ENCODE measurements at regions of chr4 and their contacts with region 1.

Region 1: GRCh38 chr4:52983563-52984303 is 121.6 kb downstream of the RASL11B start:
- DNase-seq: peak in 1 of 10 donors; percentile 37
- H3K4me3 ChIP-seq: no peak overlapping the region
- H3K27ac ChIP-seq: no peak overlapping the region
- H3K27me3 ChIP-seq: no peaks in the 10 kb centered on the region
- CTCF ChIP-seq: peak in 55 of 56 donors; percentile 72 to 95 (median 83)

Region 2: DNA sequence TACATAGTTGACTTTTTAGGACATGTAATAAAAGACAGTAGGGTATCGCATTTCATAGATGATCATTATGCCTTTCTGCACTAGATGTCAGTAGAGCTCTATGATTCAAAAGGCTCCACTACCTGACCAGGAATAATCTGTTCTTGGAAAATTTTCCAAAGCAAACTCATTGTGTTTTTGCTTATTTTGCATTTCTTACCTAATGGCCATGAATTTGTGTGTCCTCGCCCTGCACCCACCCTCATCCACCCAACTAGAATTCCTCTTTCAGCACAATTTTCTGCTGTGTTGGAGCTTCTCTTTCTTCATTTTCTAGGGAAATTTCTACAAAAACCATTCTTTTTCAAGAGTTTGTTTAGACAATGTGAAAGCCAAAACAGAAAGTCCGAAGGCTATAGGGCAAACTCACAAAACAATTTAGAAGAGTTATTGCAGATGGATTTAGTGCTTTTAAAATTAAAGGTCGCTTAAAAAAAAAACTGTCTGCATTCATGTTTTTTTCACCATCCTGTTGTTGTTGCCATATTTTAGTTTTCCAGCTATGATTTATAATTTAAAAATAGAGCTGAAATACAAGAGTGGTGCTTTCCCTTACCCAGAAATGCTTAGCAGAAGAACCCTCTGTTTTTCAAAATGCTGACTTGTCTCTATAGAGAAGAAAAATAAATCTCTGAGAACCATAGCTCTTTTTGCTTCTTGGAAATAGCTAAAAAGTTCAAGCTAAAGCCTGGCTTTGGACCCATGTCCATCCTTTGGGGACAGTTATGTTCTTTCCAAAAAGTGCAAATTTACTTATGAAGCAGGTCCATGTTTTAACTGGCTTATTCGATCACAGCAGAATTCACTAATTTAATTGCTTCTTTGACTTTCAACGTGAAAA is 748.9 kb before region 1 on chr4:
- intact Hi-C with region 1: loop called (anchors 5 to 10 kb)
- DNase-seq: no peak
- H3K4me3 ChIP-seq: no peak overlapping the region
- H3K27ac ChIP-seq: no peak overlapping the region
- H3K27me3 ChIP-seq: peaks cover 0 to 14% (median 0%) of the 10 kb centered on the region in 45 donors
- CTCF ChIP-seq: peak; percentile 22 to 79 (median 56)

Region 3: GRCh38 chr4:52376132-52376704 is 607.5 kb before region 1 on chr4:
- intact Hi-C with region 1: loop called (anchors 2 kb)
- DNase-seq: peak in 1 of 10 donors; percentile 14
- H3K4me3 ChIP-seq: peak overlapping the region in 1 of 59 donors; percentile 4
- H3K27ac ChIP-seq: no peak overlapping the region
- H3K27me3 ChIP-seq: no peaks in the 10 kb centered on the region
- CTCF ChIP-seq: peak; percentile 56 to 88 (median 72)

Region 4: DNA sequence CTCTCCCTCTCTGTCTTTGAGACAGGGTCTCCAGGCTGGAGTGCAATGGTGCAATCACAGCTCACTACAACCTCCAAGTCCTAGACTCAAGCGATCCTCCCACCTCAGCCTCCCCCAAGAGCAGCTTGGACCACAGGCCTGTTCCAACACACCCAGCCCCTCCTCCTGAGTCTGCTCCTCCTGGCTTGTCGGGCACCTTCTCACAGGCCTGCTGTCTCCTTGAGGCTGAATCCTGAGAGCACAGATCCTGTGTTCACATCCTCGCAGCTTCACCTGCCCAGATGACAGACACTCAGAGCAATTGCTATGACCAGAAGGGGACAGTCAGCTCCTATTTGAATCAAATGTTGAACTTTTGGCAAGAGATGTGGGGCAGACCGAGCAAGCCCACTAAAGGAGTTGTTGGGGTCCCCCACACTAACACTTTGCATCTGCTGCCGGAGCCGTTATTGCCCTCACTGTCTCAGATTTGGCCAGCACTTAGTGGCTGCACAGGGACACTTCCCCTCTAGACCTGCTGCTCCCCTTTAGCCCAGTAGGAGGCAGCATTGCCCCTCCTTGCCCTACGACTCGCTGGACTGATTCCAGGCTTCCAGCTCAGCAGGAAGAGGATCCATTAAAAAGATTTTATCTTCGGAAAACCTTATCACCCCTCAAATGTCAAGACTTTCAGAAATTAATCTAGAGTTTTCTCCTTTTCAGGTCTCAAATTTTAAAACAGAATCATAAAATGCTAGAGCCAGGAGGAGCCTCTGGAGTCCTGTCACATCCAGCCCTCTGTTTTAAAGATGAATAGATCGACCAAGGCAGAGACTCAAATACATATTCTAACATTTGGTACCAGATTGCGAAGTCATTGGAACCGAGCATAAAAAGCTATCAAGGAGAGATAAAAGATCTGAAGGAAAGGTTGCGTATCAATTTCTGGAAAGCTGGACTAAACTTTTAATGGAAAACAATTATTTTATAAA is 438.3 kb before region 1 on chr4:
- intact Hi-C with region 1: loop called (anchors 2 to 10 kb)
- DNase-seq: peak in 8 of 10 donors; percentile 30 to 74 (median 58)
- H3K4me3 ChIP-seq: peak overlapping the region in 7 of 59 donors; percentile 7 to 37 (median 35)
- H3K27ac ChIP-seq: no peak overlapping the region
- H3K27me3 ChIP-seq: peaks cover 0 to under 1% (median 0%) of the 10 kb centered on the region in 45 donors
- CTCF ChIP-seq: peak; percentile 33 to 93 (median 83)

Region 5: GRCh38 chr4:52592287-52592686 is 391.4 kb before region 1 on chr4:
- intact Hi-C with region 1: loop called in 1 of 2 experiments (anchors 5 kb)
- DNase-seq: no peak
- H3K4me3 ChIP-seq: no peak overlapping the region
- H3K27ac ChIP-seq: no peak overlapping the region
- H3K27me3 ChIP-seq: no peaks in the 10 kb centered on the region
- CTCF ChIP-seq: no peak

Region 6: DNA sequence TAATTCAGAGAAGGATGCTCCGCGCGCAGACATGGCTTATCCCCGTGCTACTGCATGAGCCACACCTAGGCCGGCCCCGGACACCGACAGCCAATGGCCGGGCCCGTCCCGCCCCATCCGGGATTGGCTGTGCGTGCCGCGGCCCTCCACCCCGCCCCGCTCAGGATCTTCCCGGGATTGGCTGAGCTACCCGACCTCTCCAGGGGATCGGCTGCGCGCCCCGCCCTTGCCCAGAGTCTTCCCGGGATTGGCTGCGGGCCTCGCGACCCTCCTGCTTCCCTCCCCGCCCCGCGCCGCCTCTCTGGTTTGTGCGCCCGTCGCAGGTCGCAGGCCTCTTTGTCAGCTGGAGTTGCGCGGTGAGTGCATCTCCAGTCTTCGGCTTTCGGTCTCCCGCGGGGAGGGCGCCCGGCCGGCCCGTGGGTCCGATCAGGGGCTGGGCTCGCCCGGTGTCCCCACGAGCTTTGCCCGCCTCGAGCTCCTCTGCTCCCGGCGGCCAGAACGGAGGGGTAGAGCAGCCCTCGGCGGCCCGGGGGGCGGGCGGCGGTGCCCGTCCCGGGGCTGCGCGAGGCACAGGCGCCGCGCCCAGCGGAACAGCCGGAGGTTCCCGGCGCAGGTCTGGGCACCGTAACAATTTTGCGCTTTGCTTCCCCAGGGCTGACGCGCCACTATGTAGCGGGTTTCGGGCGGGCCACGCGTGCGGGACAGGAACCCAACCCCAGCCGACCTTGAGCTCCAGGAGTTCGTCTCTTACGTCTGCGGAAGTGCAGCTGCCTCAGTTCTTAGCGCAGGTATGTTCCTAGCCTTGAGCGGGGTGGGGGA is 271.4 kb before region 1 on chr4:
- intact Hi-C with region 1: loop called (anchors 5 to 10 kb)
- DNase-seq: peak; percentile 96 to 100 (median 99)
- H3K4me3 ChIP-seq: peak overlapping the region; percentile 53 to 100 (median 91)
- H3K27ac ChIP-seq: peak overlapping the region in 58 of 59 donors; percentile 28 to 96 (median 88)
- H3K27me3 ChIP-seq: no peaks in the 10 kb centered on the region
- CTCF ChIP-seq: peak in 21 of 56 donors; percentile 6 to 49 (median 23)

Region 7: DNA sequence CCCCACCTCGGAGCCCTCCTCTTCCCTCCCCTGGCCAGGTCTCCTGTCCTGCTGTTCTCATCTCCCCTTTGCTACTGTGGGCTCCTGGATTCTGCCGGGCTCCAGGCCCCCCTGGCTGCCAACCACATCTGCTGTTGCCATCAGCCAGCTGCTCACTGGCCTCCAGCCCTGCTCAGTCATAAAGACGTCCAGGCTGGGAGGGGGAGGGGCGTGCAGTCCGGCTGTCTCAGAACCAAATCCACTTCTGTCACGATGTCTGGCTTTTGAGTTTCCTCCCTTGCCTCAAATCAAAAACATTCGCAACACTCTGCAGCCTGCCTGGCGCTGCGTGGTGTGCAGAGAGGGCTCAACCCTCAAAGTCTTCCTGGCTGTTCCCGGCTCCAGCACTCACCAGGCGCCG is 114.5 kb before region 1 on chr4:
- intact Hi-C with region 1: loop called in 1 of 2 experiments (anchors 5 kb)
- DNase-seq: peak; percentile 32 to 85 (median 74)
- H3K4me3 ChIP-seq: peak overlapping the region in 22 of 59 donors; percentile 1 to 43 (median 24)
- H3K27ac ChIP-seq: peak overlapping the region in 51 of 59 donors; percentile 13 to 80 (median 55)
- H3K27me3 ChIP-seq: no peaks in the 10 kb centered on the region
- CTCF ChIP-seq: peak in 9 of 56 donors; percentile 8 to 37 (median 10)

Region 8: GRCh38 chr4:53520116-53520515 is 536.4 kb after region 1 on chr4:
- intact Hi-C with region 1: no loop called
- DNase-seq: no peak
- H3K4me3 ChIP-seq: no peak overlapping the region
- H3K27ac ChIP-seq: no peak overlapping the region
- H3K27me3 ChIP-seq: peaks cover 0 to 5% (median 0%) of the 10 kb centered on the region in 45 donors
- CTCF ChIP-seq: no peak

Measured in dorsolateral prefrontal cortex (tissue), 120 donors.